GM12878 (cell line): ENCODE measurements at regions of chr5 and their contacts with region 1.

Region 1: DNA sequence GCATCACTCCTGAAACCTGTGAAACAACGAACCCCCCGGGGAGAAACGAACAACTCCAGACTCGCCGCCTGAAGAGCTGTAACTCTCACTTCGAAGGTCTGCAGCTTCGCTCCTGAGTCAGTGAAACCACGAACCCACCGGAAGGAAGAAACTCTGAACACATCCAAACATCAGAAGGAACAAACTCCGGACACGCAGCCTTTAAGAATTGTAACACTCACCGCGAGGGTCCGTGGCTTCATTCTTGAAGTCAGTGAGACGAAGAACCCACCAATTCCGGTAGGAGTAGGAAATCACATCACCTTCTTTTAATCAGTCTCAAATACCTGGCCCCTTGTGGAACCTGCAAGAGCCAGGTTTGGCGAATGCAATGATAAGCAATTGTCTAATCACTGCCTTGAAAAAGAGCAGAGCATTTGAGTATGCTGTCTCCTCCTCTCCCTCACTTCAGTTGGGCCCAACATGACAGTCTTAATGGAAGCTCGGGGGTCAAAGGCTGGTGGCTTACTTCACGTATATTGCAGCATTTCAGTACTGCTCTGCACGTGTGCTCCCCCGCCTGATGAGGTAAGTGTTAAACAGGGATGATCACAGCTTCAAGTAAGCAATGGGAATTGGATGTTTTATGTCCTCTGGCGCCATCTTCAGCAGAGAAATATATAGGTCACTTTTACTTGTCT is 473 bp downstream of the IRGM start:
- DNase-seq: peak; percentile 67
- ATAC-seq: peak; percentile 97
- H3K4me3 ChIP-seq: peak overlapping the region; percentile 32; the same call in 1 of the 2 replicates
- H3K27ac ChIP-seq: no peak overlapping the region
- H3K4me1 ChIP-seq: peaks cover 7% of the 10 kb centered on the region
- H3K27me3 ChIP-seq: no peaks in the 10 kb centered on the region
- CTCF ChIP-seq: peak; percentile 49 to 92 (median 72); a peak in 5 of 6 replicates
- EP300 ChIP-seq: peak in 1 of 2 experiments; percentile 38; a peak in 1 of 4 replicates
- POLR2A ChIP-seq: no peak
- RAD21 ChIP-seq: peak; percentile 95

Region 2: GRCh38 chr5:150656191-150657132 is 190.3 kb before region 1 on chr5:
- CTCF ChIA-PET with region 1: interaction called, 13 read pairs
- POLR2A ChIA-PET with region 1: no interaction called
- RAD21 ChIA-PET with region 1: interaction called, 10 read pairs
- SMC1A ChIA-PET with region 1: no interaction called
- in situ Hi-C with region 1: no loop called
- intact Hi-C with region 1: loop called (anchors 5 kb)
- DNase-seq: peak; percentile 11
- ATAC-seq: peak; percentile 84
- H3K4me3 ChIP-seq: peak overlapping the region; percentile 70; the same call in 1 of the 2 replicates
- H3K27ac ChIP-seq: no peak overlapping the region
- H3K4me1 ChIP-seq: peaks cover 7% of the 10 kb centered on the region
- H3K27me3 ChIP-seq: no peaks in the 10 kb centered on the region; a peak in 2 of 4 replicates
- CTCF ChIP-seq: peak; percentile 43 to 78 (median 75); a peak in 5 of 6 replicates
- EP300 ChIP-seq: no peak
- POLR2A ChIP-seq: peak; percentile 60
- RAD21 ChIP-seq: peak; percentile 76

Region 3: GRCh38 chr5:150700594-150701293 is 146.1 kb before region 1 on chr5 and contains the start of gene RBM22:
- CTCF ChIA-PET with region 1: interaction called, 15 read pairs
- POLR2A ChIA-PET with region 1: interaction called, 3 read pairs
- RAD21 ChIA-PET with region 1: interaction called, 17 read pairs
- SMC1A ChIA-PET with region 1: interaction called, 18 read pairs
- in situ Hi-C with region 1: no loop called
- intact Hi-C with region 1: loop called (anchors 1 kb)
- DNase-seq: peak; percentile 57
- ATAC-seq: peak; percentile 98
- H3K4me3 ChIP-seq: peak within 1 kb of the TSS; percentile 91
- H3K27ac ChIP-seq: peak within 1 kb of the TSS; percentile 87
- H3K4me1 ChIP-seq: no peaks in the 10 kb centered on the region
- H3K27me3 ChIP-seq: no peaks in the 10 kb centered on the region
- CTCF ChIP-seq: peak; percentile 57 to 70 (median 60)
- EP300 ChIP-seq: peak in 1 of 2 experiments; percentile 22; a peak in 1 of 4 replicates
- POLR2A ChIP-seq: peak; percentile 93
- RAD21 ChIP-seq: peak; percentile 29; the same call in 1 of the 2 replicates
- polyA plus RNA-seq, gene RBM22: 26.3 to 40.3 TPM

Region 4: DNA sequence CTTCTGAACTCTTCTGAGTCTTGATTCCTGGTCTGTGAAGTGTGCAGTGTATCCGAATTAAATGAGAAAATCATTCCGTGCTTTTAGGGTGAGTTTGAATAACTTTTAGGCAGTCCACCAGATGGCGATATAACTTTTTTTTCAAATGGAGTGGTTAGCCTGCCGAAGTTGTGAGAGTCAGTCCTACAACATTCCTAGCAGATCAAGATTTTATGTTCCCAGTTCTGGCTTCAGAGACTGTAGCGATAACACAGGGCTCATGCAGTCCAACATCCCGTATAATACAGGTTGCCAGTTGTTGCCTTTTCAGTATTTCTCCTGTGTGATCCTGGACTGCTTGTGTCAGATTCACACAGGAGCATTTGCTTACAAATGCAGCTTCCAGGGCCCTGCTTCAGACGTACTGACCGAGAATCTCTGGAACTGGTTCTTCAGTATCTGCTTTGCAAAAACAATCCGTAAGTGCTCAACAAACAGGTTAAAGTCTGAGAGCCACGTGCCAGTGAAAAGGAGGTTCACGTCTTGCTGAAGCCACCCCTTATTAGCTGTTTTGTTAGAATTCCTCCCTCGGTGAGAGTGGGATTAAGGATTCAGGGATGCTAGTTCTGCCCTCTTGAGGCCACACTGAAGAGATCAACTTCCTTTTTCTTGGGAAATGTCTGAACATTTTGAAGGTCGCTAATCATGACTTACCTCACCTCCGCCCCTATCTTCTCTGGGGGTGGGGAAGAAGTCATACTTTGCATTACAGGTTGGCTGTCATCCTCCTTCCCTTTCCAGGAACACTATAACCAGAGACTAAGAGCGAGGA is 45.5 kb before region 1 on chr5:
- CTCF ChIA-PET with region 1: interaction called, 50 read pairs
- POLR2A ChIA-PET with region 1: no interaction called
- RAD21 ChIA-PET with region 1: interaction called, 20 read pairs
- SMC1A ChIA-PET with region 1: interaction called, 28 read pairs
- in situ Hi-C with region 1: loop called (anchors 5 kb)
- intact Hi-C with region 1: loop called (anchors 1 kb)
- DNase-seq: no peak
- ATAC-seq: peak; percentile 83
- H3K4me3 ChIP-seq: no peak overlapping the region
- H3K27ac ChIP-seq: no peak overlapping the region
- H3K4me1 ChIP-seq: no peaks in the 10 kb centered on the region
- H3K27me3 ChIP-seq: no peaks in the 10 kb centered on the region
- CTCF ChIP-seq: peak; percentile 49 to 60 (median 52); a peak in 5 of 6 replicates
- EP300 ChIP-seq: no peak
- POLR2A ChIP-seq: no peak
- RAD21 ChIP-seq: peak; percentile 61

Region 5: GRCh38 chr5:150829744-150830143 is 17.1 kb before region 1 on chr5:
- CTCF ChIA-PET with region 1: interaction called, 11 read pairs
- POLR2A ChIA-PET with region 1: no interaction called
- RAD21 ChIA-PET with region 1: no interaction called
- SMC1A ChIA-PET with region 1: no interaction called
- in situ Hi-C with region 1: no loop called
- intact Hi-C with region 1: no loop called
- DNase-seq: no peak
- ATAC-seq: no peak
- H3K4me3 ChIP-seq: no peak overlapping the region
- H3K27ac ChIP-seq: no peak overlapping the region
- H3K4me1 ChIP-seq: no peaks in the 10 kb centered on the region
- H3K27me3 ChIP-seq: no peaks in the 10 kb centered on the region
- CTCF ChIP-seq: no peak
- EP300 ChIP-seq: no peak
- POLR2A ChIP-seq: no peak
- RAD21 ChIP-seq: no peak